Psoas muscle (tissue), 8 donors: ENCODE measurements at regions of chr19 and their contacts with region 1.

Region 1: GRCh38 chr19:49877020-49877878 is at the starts of genes AKT1S1 and TBC1D17:
- DNase-seq: peak; percentile 98 to 100
- ATAC-seq: peak; percentile 80 to 87 (median 84)
- H3K4me3 ChIP-seq: peak within 1 kb of the TSS; percentile 69
- H3K27ac ChIP-seq: peak within 1 kb of the TSS; percentile 92
- H3K4me1 ChIP-seq: peaks cover 35% of the 10 kb centered on the region
- H3K27me3 ChIP-seq: no peaks in the 10 kb centered on the region
- CTCF ChIP-seq: no peak
- total RNA-seq, gene AKT1S1: 56.0 to 82.8 (median 57.2) TPM
- total RNA-seq, gene TBC1D17: 81.8 to 107 (median 94.8) TPM

Region 2: GRCh38 chr19:49497047-49497788 is 380.0 kb before region 1 on chr19:
- intact Hi-C with region 1: loop called in 1 of 2 experiments (anchors 5 kb)
- DNase-seq: peak; percentile 61 to 72
- ATAC-seq: peak in 1 of 4 donors; percentile 31
- H3K4me3 ChIP-seq: peak overlapping the region; percentile 99
- H3K27ac ChIP-seq: peak overlapping the region; percentile 98
- H3K4me1 ChIP-seq: peaks cover 35% of the 10 kb centered on the region
- H3K27me3 ChIP-seq: no peaks in the 10 kb centered on the region
- CTCF ChIP-seq: no peak

Region 3: DNA sequence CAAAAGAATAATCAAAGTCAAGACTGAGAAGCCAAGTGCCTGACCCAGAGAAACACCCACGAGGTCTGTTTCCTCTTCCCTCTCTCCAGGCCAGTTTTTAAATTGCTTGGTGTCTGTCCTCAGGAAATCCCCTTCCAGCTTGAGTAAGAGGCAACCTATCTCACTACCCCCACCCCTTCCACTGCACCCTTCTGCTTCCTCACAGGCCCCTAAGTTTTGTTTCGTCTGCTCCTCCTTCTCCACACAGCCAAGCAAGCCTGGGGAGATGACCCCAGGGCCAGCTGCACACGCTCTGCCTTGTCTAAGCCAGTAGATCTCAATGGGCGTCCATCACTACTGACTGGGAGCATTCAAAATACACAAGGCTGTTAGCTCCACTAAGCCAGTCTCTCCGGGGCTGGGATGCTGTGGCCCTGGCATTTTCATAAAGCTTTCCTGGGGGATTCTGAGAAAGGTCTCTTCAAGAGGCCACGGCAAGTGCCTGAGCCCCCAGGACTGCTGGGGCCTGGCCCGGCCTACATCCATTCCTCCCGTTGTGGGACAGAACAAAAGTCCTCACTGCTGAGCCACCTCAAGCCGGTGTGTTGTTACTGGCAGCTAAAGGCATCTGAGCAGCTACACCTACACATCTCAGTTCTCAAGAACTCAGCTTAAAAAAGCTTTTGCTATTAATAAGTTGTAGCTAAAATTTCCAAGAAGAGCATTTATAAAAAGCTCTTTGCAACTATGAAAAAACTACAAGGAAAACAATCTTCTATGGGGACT is 34.3 kb after region 1 on chr19:
- intact Hi-C with region 1: no loop called
- DNase-seq: no peak
- ATAC-seq: no peak
- H3K4me3 ChIP-seq: no peak overlapping the region
- H3K27ac ChIP-seq: no peak overlapping the region
- H3K4me1 ChIP-seq: no peaks in the 10 kb centered on the region
- H3K27me3 ChIP-seq: no peaks in the 10 kb centered on the region
- CTCF ChIP-seq: no peak